Panc1 (cell line): ENCODE measurements at regions of chr7 and their contacts with region 1.

Region 1: GRCh38 chr7:105934572-105935185 is 28.4 kb upstream of the CDHR3 start:
- DNase-seq: no peak
- ATAC-seq: peak; percentile 91
- H3K4me3 ChIP-seq: no peak overlapping the region
- H3K27ac ChIP-seq: no peak overlapping the region
- H3K4me1 ChIP-seq: no peaks in the 10 kb centered on the region
- H3K27me3 ChIP-seq: no peaks in the 10 kb centered on the region
- CTCF ChIP-seq: peak; percentile 54

Region 2: DNA sequence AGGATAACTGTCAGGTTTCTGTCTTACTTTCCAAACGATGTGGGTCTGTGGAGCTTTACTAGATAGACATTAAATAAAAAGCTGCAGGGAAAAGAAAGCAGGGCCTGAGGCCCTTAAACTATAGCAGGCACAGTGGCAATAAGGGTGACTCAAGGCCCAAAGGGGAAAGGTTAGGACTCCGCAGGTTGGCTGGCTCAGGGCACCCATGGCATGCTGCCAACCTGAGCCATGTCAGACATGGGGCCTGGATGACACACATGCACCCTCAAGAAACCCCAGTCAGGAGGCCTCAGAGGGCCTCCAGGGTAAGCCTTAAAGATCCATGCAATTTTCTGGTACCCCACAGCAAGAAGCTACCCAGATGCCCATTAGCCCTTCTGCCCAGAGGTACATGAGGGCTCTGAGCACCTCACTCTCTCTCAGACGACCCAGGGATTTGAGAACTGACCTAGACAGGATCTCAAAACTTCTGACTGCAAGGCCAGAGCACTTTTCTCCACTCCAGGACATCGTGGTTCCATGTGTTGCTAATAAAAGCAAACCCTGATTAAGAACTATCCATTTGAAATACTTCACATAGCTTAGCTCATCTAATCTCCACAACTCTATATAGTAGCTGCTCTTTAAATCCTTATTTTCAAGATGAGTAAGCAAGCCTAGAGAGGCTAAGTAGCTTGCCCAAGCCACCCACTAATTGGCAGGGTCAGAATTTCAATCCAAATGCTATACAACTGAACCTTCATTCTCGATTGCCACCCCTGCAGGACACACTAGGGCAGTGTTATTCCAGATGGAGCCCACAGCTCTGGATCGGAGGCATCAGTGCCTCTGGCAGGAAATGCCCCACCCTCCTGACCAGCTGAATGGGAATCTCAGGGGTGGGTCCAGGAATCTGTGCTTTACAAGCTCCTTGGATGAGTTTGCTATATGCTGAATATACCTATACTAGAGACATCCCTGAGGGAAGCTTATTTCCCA is 220.9 kb before region 1 on chr7:
- CTCF ChIA-PET with region 1: no interaction called
- POLR2A ChIA-PET with region 1: no interaction called
- in situ Hi-C with region 1: no loop called
- intact Hi-C with region 1: no loop called
- DNase-seq: no peak
- ATAC-seq: no peak
- H3K4me3 ChIP-seq: no peak overlapping the region
- H3K27ac ChIP-seq: no peak overlapping the region
- H3K4me1 ChIP-seq: no peaks in the 10 kb centered on the region
- H3K27me3 ChIP-seq: no peaks in the 10 kb centered on the region
- CTCF ChIP-seq: no peak

Region 3: GRCh38 chr7:105916603-105917002 is 18.1 kb before region 1 on chr7:
- CTCF ChIA-PET with region 1: no interaction called
- POLR2A ChIA-PET with region 1: no interaction called
- in situ Hi-C with region 1: no loop called
- intact Hi-C with region 1: no loop called
- DNase-seq: no peak
- ATAC-seq: no peak
- H3K4me3 ChIP-seq: no peak overlapping the region
- H3K27ac ChIP-seq: no peak overlapping the region
- H3K4me1 ChIP-seq: no peaks in the 10 kb centered on the region
- H3K27me3 ChIP-seq: no peaks in the 10 kb centered on the region
- CTCF ChIP-seq: no peak

Region 4: DNA sequence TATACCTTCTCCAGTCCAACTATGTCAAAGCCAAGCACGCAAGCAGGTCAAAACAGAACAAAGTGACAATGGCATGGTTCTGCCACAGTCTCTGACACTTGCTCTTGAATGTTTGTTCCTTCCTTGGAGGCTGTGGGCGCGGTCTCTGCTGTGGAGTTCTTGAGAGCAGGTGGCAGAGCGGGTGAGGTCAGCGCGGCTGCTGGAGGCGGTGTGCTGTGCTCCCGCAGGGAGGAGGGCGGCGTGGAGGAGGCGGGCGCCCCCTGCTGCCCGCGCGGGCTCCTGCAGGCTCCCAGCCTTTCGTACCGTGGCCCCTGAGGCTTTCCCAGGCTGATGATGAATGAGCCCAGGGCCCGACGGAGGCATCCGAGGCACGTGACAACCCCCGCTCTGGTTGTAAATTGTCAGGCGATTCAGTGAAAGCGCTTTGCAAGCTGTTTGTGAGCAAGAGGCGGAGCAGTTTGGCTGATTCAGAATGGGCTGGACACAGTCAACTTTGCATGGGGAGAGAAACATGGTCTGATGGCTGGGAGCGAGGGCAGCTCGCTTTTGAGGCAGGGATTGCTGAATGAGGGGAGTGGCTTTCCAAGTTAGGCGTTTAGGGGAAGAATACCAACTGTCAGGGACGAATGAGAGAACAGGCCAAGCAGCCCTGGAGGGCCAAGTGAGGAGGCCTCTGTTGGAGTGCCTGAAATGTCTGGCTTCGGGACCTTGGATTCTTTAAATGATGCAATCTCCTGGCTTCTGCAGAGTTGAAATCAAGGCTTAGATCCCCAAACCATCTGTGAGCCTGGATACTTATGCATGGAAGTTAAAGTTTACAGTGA is 74.9 kb after region 1 on chr7:
- CTCF ChIA-PET with region 1: no interaction called
- POLR2A ChIA-PET with region 1: interaction called, 3 read pairs
- in situ Hi-C with region 1: no loop called
- intact Hi-C with region 1: loop called (anchors 2 kb)
- DNase-seq: peak; percentile 35
- ATAC-seq: peak; percentile 98
- H3K4me3 ChIP-seq: peak overlapping the region in 1 of 2 experiments; percentile 19; a peak in 2 of 4 replicates
- H3K27ac ChIP-seq: no peak overlapping the region
- H3K4me1 ChIP-seq: no peaks in the 10 kb centered on the region
- H3K27me3 ChIP-seq: no peaks in the 10 kb centered on the region
- CTCF ChIP-seq: peak; percentile 97

Region 5: GRCh38 chr7:106041140-106041717 is 106.5 kb after region 1 on chr7:
- CTCF ChIA-PET with region 1: no interaction called
- POLR2A ChIA-PET with region 1: no interaction called
- in situ Hi-C with region 1: no loop called
- intact Hi-C with region 1: loop called (anchors 2 kb)
- DNase-seq: peak; percentile 43
- ATAC-seq: peak; percentile 71
- H3K4me3 ChIP-seq: no peak overlapping the region
- H3K27ac ChIP-seq: no peak overlapping the region
- H3K4me1 ChIP-seq: no peaks in the 10 kb centered on the region; the same call in 1 of the 2 replicates
- H3K27me3 ChIP-seq: no peaks in the 10 kb centered on the region; the same call in 1 of the 2 replicates
- CTCF ChIP-seq: peak; percentile 87

Region 6: DNA sequence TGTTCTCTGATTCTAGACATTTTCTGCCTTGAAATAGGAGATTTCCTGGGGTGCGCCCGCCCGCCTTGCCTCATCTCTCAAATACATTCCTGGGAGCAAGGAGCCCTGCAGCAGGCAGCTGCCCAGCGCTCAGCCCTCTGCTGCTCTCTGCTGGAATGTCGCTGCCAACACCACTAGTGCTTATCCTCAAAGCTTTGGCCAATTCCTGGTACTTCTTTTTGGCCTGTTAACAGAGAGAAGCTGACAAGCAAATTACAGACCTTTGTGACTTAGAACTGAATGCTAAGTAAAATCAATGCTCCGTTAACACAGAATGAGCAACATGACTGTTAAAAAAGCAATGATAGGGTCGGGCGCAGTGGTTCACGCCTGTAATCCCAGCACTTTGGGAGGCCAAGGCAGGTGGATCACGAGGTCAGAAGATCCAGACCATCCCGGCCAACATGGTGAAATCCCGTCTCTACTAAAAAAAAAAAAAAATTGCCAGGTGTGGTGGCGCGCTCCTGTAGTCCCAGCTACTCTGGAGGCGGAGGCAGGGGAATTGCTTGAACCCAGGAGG is 219.3 kb after region 1 on chr7:
- CTCF ChIA-PET with region 1: no interaction called
- POLR2A ChIA-PET with region 1: no interaction called
- in situ Hi-C with region 1: no loop called
- intact Hi-C with region 1: loop called (anchors 5 kb)
- DNase-seq: peak; percentile 64
- ATAC-seq: peak; percentile 99
- H3K4me3 ChIP-seq: no peak overlapping the region
- H3K27ac ChIP-seq: no peak overlapping the region
- H3K4me1 ChIP-seq: no peaks in the 10 kb centered on the region
- H3K27me3 ChIP-seq: no peaks in the 10 kb centered on the region
- CTCF ChIP-seq: peak; percentile 97

Region 7: DNA sequence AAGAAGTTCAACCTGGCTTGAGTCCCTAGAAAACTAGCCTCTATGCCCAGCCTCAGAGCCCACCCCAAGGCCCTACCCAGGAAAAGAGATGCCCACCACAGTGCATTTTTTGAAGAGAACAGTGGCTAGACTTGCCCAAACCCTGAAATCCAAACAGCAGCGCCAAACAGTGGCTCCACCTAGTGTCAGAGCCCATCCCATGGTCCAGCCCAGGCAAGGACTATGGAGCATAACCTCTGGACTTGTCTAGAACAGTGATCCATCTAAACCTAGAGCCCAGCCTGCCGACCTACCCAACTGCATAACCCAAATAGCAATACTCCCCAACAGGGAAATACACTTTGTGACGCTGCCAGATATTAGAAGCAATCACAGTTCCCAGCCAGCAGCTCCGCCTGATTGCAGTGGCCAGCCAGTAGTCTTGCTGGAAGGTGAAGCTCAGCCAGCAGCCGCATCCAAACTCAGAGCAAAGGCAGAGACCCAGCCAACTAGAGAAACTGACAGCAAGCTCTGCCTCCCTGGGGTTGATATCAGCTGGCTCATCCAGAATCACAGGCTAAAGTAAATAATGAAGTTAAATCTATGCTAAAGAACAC is 1278.6 kb after region 1 on chr7:
- CTCF ChIA-PET with region 1: no interaction called
- POLR2A ChIA-PET with region 1: no interaction called
- in situ Hi-C with region 1: no loop called
- intact Hi-C with region 1: no loop called
- DNase-seq: no peak
- ATAC-seq: no peak
- H3K4me3 ChIP-seq: no peak overlapping the region
- H3K27ac ChIP-seq: no peak overlapping the region
- H3K4me1 ChIP-seq: no peaks in the 10 kb centered on the region
- H3K27me3 ChIP-seq: no peaks in the 10 kb centered on the region
- CTCF ChIP-seq: no peak